A549 (cell line): ENCODE measurements at regions of chr20 and their contacts with region 1.

Region 1: GRCh38 chr20:3312940-3313682 is 74.1 kb upstream of the SLC4A11 start:
- DNase-seq: peak; percentile 24 to 70
- ATAC-seq: peak; percentile 81 to 89
- H3K4me3 ChIP-seq: no peak overlapping the region; the same call in 2 of the 3 replicates
- H3K27ac ChIP-seq: peak overlapping the region; percentile 79 to 82
- H3K4me1 ChIP-seq: peaks cover 35% of the 10 kb centered on the region
- CTCF ChIP-seq: no peak
- EP300 ChIP-seq: peak in 1 of 2 experiments; percentile 29; a peak in 1 of 5 replicates
- POLR2A ChIP-seq: no peak
- RAD21 ChIP-seq: no peak

Region 2: GRCh38 chr20:3330046-3330741 is 17.1 kb after region 1 on chr20:
- CTCF ChIA-PET with region 1: interaction called, 22 read pairs
- POLR2A ChIA-PET with region 1: no interaction called
- DNase-seq: peak in 1 of 2 experiments; percentile 27
- ATAC-seq: peak; percentile 70 to 76; a peak in 4 of 6 replicates
- H3K4me3 ChIP-seq: no peak overlapping the region
- H3K27ac ChIP-seq: no peak overlapping the region
- H3K4me1 ChIP-seq: no peaks in the 10 kb centered on the region
- CTCF ChIP-seq: peak; percentile 9; the same call in 1 of the 3 replicates
- EP300 ChIP-seq: no peak
- POLR2A ChIP-seq: no peak
- RAD21 ChIP-seq: no peak

Region 3: DNA sequence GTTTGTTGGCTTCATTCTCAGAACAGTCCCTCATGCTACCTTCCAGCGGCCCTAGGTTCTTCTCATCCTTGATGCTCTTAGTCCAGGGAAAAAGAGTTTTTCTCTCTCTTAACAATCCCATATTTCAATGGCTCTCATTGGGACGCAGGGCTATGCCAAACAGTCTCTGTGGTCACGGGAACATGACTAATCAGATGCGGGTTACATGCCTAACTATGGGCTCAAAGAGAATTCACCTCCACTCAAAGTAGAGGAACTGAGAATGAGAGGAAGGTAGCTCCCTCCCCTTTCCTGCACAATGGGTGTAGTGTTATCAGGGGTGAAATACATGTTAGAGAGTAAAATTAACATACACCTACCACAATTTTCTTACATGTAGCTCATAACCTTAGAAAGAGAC is 139.6 kb after region 1 on chr20:
- CTCF ChIA-PET with region 1: no interaction called
- POLR2A ChIA-PET with region 1: no interaction called
- DNase-seq: no peak
- ATAC-seq: peak in 1 of 2 experiments; percentile 21; a peak in 2 of 6 replicates
- H3K4me3 ChIP-seq: no peak overlapping the region
- H3K27ac ChIP-seq: no peak overlapping the region
- H3K4me1 ChIP-seq: no peaks in the 10 kb centered on the region
- CTCF ChIP-seq: no peak
- EP300 ChIP-seq: no peak
- POLR2A ChIP-seq: no peak
- RAD21 ChIP-seq: no peak

Region 4: GRCh38 chr20:3557237-3557785 is 244.2 kb after region 1 on chr20:
- CTCF ChIA-PET with region 1: no interaction called
- POLR2A ChIA-PET with region 1: no interaction called
- DNase-seq: no peak
- ATAC-seq: no peak
- H3K4me3 ChIP-seq: no peak overlapping the region
- H3K27ac ChIP-seq: no peak overlapping the region
- H3K4me1 ChIP-seq: peaks cover 37% of the 10 kb centered on the region
- CTCF ChIP-seq: no peak
- EP300 ChIP-seq: no peak
- POLR2A ChIP-seq: no peak
- RAD21 ChIP-seq: no peak